ENCODE measurements at regions of chr13 and their contacts with region 1.

Region 1: GRCh38 chr13:44437356-44438233 is 64.0 kb downstream of the SERP2 start:
- H3K4me3 Mint-ChIP-seq: no peak overlapping the region
- H3K27ac Mint-ChIP-seq: no peak overlapping the region
- H3K4me1 Mint-ChIP-seq: peaks cover 28% of the 10 kb centered on the region
- H3K27me3 Mint-ChIP-seq: peaks cover 52% of the 10 kb centered on the region

Region 2: GRCh38 chr13:44050450-44051063 is 387.0 kb before region 1 on chr13:
- intact Hi-C with region 1: loop called (anchors 1 kb)
- H3K4me3 Mint-ChIP-seq: no peak overlapping the region
- H3K27ac Mint-ChIP-seq: no peak overlapping the region
- H3K4me1 Mint-ChIP-seq: peaks cover 4% of the 10 kb centered on the region
- H3K27me3 Mint-ChIP-seq: peaks cover 48% of the 10 kb centered on the region

Region 3: GRCh38 chr13:44191504-44192171 is 246.0 kb before region 1 on chr13:
- intact Hi-C with region 1: loop called (anchors 1 kb)
- H3K4me3 Mint-ChIP-seq: no peak overlapping the region
- H3K27ac Mint-ChIP-seq: no peak overlapping the region
- H3K4me1 Mint-ChIP-seq: peaks cover 10% of the 10 kb centered on the region
- H3K27me3 Mint-ChIP-seq: peaks cover 38% of the 10 kb centered on the region

Measured in dendritic cell treated with granulocyte-macrophage colony-stimulating factor and Interleukin-4, amounts not matched to agents 40 ng/mL and 50 ng/mL, for 4 days (primary cell).